Activated B cell treated with CpG ODN at 0.5 μM for 24 hours (primary cell): ENCODE measurements at regions of chr21 and their contacts with region 1.

Region 1: DNA sequence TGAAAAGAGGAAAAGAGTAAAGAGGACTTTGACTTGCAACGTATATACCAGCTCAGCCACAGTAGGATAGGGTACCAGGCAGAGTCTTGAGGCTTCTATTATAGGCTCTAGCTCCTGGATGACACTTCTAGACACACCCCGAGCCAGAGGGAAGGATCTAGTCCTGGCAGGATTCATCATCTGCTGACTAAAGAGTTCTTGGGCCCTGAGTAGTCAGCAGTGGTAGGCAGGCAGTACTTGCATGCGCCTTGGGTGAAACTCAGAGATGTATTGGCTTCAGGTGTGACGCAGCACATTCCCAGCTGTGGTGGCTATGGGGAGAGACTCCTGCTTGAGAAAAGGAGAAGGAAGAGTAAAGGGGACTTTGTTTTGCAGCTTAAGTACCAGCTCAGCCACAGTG is 162.3 kb upstream of the APP start:
- DNase-seq: no peak
- ATAC-seq: no peak
- H3K4me3 Mint-ChIP-seq: no peak overlapping the region
- H3K27ac Mint-ChIP-seq: no peak overlapping the region
- H3K4me1 Mint-ChIP-seq: no peaks in the 10 kb centered on the region
- H3K27me3 Mint-ChIP-seq: no peaks in the 10 kb centered on the region
- CTCF ChIP-seq: no peak

Region 2: DNA sequence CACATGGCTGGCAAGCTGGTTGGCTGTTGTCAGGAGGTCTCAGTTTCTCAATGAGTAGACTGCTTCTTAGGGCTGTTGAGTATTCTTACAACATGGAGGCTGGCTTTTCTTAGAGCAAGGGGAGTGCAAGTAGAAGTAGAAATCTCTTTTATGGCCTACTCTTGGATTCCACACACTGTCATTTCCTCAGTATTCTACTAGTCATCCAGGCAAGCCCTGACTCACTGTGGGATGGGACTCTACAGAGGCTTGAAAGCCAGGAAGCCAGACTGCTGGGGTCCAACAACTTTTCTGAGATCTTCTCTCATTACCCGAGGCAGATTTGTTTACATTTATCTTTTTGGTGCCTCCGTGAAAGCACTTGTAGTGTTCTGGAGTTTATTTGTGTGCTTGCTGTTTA is 33.9 kb after region 1 on chr21:
- CTCF ChIA-PET with region 1: no interaction called
- POLR2A ChIA-PET with region 1: no interaction called
- intact Hi-C with region 1: loop called (anchors 1 kb)
- DNase-seq: no peak
- ATAC-seq: no peak
- H3K4me3 Mint-ChIP-seq: no peak overlapping the region
- H3K27ac Mint-ChIP-seq: no peak overlapping the region
- H3K4me1 Mint-ChIP-seq: no peaks in the 10 kb centered on the region
- H3K27me3 Mint-ChIP-seq: no peaks in the 10 kb centered on the region
- CTCF ChIP-seq: no peak